ENCODE measurements at regions of chr20 and their contacts with region 1.

Region 1: GRCh38 chr20:2942439-2942838 is 69.2 kb downstream of the PTPRA start:
- DNase-seq: no peak
- H3K4me3 ChIP-seq: no peak overlapping the region
- H3K27ac ChIP-seq: no peak overlapping the region
- H3K4me1 ChIP-seq: no peaks in the 10 kb centered on the region
- H3K27me3 ChIP-seq: no peaks in the 10 kb centered on the region
- CTCF ChIP-seq: no peak

Region 2: DNA sequence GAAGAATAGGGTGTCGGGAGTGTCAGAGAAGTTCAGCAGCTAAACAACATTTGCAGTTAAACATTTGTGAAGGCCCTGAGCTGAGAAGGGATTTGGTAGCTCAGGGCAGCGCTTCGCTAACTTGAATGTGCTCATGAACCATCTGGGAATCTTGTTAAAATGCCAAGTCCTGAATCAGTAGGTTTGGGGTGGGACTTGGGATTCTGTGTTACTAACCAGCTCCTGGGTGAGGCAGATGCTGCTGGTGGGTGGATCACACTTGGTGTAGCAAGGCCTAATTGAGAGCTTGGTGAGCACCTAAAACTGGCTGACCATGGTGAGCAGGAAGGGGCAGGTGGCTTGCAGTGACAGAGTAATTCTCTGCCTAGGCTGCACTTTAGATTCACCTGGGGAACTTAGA is 63.3 kb before region 1 on chr20:
- CTCF ChIA-PET with region 1: no interaction called
- dilution Hi-C with region 1: loop called (anchors 5 kb)
- in situ Hi-C with region 1: no loop called
- intact Hi-C with region 1: no loop called
- DNase-seq: peak; percentile 30
- H3K4me3 ChIP-seq: no peak overlapping the region
- H3K27ac ChIP-seq: no peak overlapping the region
- H3K4me1 ChIP-seq: peaks cover 5% of the 10 kb centered on the region
- H3K27me3 ChIP-seq: no peaks in the 10 kb centered on the region
- CTCF ChIP-seq: no peak